A673 (cell line): ENCODE measurements at regions of chr5 and their contacts with region 1.

Region 1: GRCh38 chr5:80083101-80083890 is 48.1 kb downstream of the THBS4 start:
- DNase-seq: peak; percentile 87
- H3K4me3 ChIP-seq: peak overlapping the region; percentile 33
- H3K27ac ChIP-seq: no peak overlapping the region
- H3K4me1 ChIP-seq: peaks cover 4% of the 10 kb centered on the region
- H3K27me3 ChIP-seq: no peaks in the 10 kb centered on the region
- CTCF ChIP-seq: peak; percentile 79

Region 2: GRCh38 chr5:79133657-79134451 is 949.4 kb before region 1 on chr5:
- CTCF ChIA-PET with region 1: interaction called, 4 read pairs
- POLR2A ChIA-PET with region 1: no interaction called
- intact Hi-C with region 1: loop called (anchors 2 kb)
- DNase-seq: peak; percentile 88
- H3K4me3 ChIP-seq: peak overlapping the region; percentile 28
- H3K27ac ChIP-seq: peak overlapping the region; percentile 70
- H3K4me1 ChIP-seq: peaks cover 5% of the 10 kb centered on the region
- H3K27me3 ChIP-seq: no peaks in the 10 kb centered on the region
- CTCF ChIP-seq: peak; percentile 86

Region 3: DNA sequence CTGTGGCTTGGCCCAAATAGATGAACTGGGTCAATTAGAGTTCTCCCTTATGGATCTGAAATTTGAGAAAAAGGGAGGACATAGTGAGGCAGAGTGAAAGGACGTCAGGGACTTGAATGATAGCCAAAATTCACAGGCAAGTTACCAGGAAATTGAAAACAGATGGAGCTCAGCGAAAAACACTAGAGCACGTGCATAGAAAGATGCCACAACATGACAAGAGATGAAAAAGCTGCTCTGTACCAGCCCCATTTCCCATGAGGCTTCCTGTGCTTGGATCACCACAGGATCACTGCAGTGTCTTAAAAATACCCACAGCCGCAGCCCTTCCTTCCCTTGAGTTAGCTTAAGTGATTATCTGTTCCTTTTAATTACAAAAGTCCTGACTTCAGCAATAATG is 530.3 kb before region 1 on chr5:
- CTCF ChIA-PET with region 1: no interaction called
- POLR2A ChIA-PET with region 1: no interaction called
- intact Hi-C with region 1: loop called (anchors 5 kb)
- DNase-seq: peak; percentile 88
- H3K4me3 ChIP-seq: no peak overlapping the region
- H3K27ac ChIP-seq: no peak overlapping the region
- H3K4me1 ChIP-seq: peaks cover 19% of the 10 kb centered on the region
- H3K27me3 ChIP-seq: peaks cover 12% of the 10 kb centered on the region
- CTCF ChIP-seq: no peak

Region 4: GRCh38 chr5:79878721-79879336 is 204.5 kb before region 1 on chr5:
- CTCF ChIA-PET with region 1: interaction called, 16 read pairs
- POLR2A ChIA-PET with region 1: no interaction called
- intact Hi-C with region 1: loop called (anchors 2 kb)
- DNase-seq: peak; percentile 48
- H3K4me3 ChIP-seq: no peak overlapping the region
- H3K27ac ChIP-seq: no peak overlapping the region
- H3K4me1 ChIP-seq: no peaks in the 10 kb centered on the region
- H3K27me3 ChIP-seq: no peaks in the 10 kb centered on the region
- CTCF ChIP-seq: peak; percentile 76

Region 5: DNA sequence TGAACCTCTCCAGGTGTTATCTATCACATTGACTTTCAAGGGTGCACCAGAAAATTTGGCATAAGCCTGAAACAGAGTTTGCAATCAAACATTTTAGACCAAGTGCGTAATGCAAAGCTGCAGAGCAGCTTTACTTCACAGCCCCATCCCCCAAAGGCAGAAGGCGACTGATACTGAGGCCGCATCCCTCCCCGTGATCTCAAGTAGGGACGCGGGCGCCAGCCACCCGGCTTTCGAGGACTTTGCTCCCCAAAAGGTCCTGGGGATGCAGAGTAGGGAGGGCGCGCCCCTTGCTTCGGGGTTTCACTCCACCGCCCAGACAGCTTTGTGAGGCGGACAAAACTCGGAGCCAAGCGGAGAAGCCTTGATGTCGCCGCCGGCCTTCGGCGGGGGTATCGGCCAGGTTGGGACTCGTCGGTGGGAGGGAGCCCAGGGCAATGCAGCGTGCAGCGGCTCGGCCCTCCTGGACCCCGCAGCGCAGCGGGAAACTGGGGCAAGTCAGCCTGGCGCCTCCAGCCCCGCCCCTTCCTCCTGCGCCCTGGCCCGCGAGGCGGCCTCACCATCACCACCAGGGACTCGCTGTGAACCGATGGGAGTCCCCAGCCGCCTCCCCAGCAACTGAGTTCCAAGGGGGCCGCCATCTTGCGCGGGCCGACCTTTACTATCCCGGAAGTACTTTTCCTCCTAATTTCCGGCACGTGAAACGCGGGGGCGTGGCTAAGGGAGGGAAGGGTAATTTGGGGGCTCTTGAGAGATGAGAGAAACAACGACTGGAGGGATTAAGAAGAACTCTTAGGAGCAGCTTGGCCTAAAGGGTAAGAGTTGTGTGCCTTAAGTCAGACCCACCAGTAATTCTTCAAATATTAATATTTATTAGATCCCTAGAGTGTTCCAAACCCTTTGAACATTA is 92.4 kb before region 1 on chr5 and contains the start of gene MTX3:
- CTCF ChIA-PET with region 1: interaction called, 5 read pairs
- POLR2A ChIA-PET with region 1: no interaction called
- intact Hi-C with region 1: loop called (anchors 5 kb)
- DNase-seq: peak; percentile 98
- H3K4me3 ChIP-seq: peak within 1 kb of the TSS; percentile 95
- H3K27ac ChIP-seq: peak within 1 kb of the TSS; percentile 79
- H3K4me1 ChIP-seq: peaks cover 13% of the 10 kb centered on the region
- H3K27me3 ChIP-seq: no peaks in the 10 kb centered on the region
- CTCF ChIP-seq: no peak
- total RNA-seq, gene MTX3: 24.2 and 28.1 TPM in 2 replicates

Region 6: DNA sequence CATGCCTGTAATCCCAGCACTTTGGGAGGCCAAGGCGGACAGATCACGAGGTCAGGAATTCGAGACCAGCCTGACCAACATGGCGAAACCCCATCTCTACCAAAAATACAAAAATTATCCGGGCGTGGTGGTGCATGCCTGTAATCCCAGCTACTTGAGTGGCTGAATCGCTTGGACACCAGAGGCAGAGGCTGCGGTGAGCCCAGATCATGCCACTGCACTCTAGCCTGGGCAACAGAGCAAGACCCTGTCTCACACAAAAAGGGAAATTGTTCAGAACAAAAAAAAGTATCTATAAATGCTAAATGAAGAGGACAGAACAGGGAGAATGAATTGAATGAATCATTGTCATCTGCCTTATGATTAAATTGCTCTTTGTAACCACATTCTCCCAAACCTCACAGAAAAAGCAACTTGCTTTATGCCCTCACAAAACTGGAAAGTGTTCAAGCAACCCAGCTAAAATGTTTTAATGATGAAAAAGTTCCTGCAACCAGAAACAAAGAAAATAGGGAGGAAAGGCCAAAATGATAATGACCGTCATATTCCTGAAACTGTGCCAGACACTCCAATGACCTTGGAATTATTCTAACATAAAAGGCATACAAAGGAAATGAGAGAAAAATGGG is 88.9 kb after region 1 on chr5:
- CTCF ChIA-PET with region 1: no interaction called
- POLR2A ChIA-PET with region 1: no interaction called
- intact Hi-C with region 1: no loop called
- DNase-seq: no peak
- H3K4me3 ChIP-seq: no peak overlapping the region
- H3K27ac ChIP-seq: no peak overlapping the region
- H3K4me1 ChIP-seq: no peaks in the 10 kb centered on the region
- H3K27me3 ChIP-seq: no peaks in the 10 kb centered on the region
- CTCF ChIP-seq: no peak

Region 7: DNA sequence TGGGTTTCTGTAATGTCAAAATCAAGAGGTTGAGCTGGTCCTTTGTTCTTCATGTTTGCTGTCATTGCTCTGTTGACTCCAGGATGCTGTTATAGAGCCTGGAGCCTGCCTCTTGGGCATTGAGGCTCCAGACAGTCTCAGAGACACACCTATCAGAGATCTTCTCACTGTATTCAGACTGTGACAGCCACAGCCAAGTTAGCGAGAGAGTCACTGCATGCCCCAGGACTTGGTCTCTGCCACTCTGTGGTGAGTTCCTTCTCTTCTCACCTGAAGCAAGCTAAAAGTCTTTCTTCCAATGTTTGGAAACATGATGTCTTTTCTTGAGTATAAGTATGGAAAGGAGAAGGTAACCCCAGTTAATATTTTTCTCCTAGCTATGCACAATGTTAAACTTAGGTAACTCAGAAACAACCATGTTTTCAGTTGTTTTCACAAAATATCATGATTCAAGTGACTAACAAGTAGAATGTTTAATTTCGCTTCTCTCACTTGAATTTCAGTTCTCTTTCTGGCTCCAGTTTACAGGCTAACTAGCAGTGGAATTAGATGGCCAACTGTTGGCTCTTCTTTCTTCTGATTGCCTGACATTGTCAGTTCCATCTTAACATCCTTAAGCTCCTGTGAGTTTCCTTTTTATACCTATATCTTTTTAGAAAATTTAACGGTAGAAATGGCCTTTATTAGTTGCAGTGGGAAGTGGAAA is 303.9 kb after region 1 on chr5:
- CTCF ChIA-PET with region 1: no interaction called
- POLR2A ChIA-PET with region 1: no interaction called
- intact Hi-C with region 1: no loop called
- DNase-seq: no peak
- H3K4me3 ChIP-seq: no peak overlapping the region
- H3K27ac ChIP-seq: no peak overlapping the region
- H3K4me1 ChIP-seq: no peaks in the 10 kb centered on the region
- H3K27me3 ChIP-seq: no peaks in the 10 kb centered on the region
- CTCF ChIP-seq: no peak